ENCODE measurements at regions of chr5 and their contacts with region 1.

Region 1: DNA sequence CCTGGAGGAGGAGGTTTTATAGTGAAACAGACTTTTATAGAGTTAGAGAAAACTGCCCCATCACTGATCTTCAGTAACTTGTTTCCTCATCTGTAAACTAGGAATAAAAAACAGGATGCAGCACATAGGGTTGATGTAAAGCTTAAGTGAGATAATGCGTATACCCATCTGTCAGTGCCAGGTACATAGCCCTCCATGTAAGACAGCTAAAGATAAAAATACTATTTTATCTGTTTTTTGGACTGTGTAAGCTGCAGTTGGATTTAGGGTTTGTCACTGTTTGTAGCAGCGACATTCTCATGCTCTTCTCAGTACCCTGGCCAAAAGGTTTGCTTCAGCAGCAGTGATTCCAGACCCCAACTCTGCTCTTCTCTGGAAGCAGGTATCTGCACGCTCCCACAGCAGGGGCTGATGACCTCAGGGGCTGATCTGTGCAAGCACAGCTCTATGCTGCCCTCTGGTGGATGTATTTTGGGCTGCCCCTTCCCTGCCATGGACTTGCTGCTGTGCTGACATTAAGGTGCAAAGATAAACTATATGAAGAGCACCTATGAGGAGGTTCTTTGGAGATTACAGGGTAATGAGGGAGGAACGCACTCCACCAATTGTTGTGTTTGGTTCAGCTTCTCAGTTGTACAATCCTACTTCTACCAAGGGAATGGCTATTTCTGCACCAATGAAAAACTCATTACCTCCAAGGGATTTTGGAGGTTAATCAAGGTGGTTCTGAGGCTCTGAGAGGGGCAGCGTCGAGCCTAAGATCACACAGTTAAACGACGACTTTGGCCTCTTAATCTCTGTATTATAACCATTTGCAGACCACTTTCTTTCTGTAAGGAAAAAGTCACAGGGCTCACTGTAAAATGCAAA is 13.1 kb downstream of the HMHB1 start:
- DNase-seq: peak; percentile 72
- CTCF ChIP-seq: peak; percentile 96

Region 2: DNA sequence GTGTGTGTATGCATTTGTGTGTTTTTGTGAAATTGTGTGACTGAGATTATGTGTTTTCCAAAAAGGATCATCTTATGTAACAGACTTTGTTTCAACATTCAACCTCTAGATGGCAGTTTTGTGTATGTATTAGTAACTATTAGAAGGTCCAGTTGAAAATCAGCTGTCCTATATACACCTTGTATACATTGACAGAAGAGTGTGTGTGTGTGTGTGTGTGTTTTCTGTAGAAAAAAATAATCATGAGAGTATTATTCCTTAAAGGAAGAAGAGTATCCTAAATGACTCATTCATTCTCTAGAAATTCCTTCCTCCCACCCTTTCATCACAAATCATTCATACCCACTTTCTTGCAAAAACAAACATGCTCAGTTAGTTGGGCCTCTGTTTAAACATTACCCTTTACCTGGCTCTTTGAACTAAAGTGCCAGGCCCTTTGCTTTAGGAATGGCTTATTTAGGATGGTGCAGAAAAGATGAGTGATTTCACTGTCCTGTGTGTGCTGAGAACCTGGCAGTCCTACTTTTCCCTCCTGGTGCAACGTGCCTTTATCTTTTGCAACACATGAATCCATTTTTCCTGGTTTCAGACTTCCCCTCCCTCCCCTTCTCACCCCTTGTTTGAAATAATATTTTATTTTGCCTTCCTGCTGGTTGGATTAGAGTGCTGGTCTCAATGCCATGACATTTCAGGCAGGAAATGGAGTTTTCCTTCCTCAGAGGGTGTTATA is 902.7 kb before region 1 on chr5:
- CTCF ChIA-PET with region 1: interaction called, 22 read pairs
- POLR2A ChIA-PET with region 1: no interaction called
- DNase-seq: peak; percentile 49
- CTCF ChIP-seq: peak; percentile 44

Region 3: GRCh38 chr5:143403593-143404415 is 421.3 kb before region 1 on chr5 and contains the start of gene NR3C1:
- CTCF ChIA-PET with region 1: interaction called, 15 read pairs
- POLR2A ChIA-PET with region 1: interaction called, 4 read pairs
- DNase-seq: peak; percentile 82
- CTCF ChIP-seq: peak; percentile 63

Region 4: DNA sequence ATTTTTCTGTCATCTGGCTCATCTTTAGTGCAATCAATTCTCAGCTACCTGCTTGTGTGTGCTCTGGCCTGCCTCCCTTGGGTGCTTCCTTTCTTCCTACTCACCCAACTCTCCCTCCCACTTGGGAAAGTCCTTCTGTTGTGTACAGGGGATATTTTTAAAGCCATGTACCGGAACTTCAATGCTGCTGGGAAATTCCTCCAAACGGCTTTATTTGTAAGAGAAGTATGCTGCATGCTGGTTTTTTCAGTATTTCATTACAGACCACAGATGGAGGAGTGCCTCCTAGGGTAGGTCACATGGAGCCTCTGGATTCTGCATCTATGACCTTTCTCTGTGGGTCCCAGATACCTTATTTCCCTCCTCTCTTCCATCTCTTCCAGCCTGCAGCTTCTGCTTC is 18.5 kb before region 1 on chr5:
- CTCF ChIA-PET with region 1: interaction called, 18 read pairs
- POLR2A ChIA-PET with region 1: no interaction called
- DNase-seq: no peak
- CTCF ChIP-seq: no peak

Region 5: DNA sequence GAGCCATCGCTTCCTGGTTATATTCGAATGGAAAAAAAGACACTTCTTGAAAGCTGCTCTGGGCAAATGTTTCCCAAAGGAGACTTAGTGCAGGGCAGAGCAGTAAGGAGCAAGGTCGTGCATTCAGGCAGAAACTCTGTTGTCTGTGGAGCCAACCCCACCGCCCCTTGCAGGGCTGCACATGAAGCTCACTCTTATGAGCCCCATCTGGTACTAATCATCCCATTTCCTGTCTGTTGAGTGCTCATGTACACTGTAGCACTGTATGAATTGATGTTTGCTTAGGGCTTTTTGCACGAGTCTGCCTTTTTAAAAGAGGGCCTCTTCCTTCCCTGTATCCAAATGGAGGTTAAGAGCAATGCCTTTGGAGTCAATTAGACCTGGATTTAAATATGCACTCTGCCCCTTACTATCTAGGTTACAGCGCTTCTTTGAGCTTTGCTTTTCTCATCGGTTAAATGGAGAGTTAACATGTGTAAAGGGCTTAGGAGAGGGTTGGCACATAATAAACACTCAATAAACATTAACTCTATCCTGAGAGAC is 12.3 kb after region 1 on chr5:
- CTCF ChIA-PET with region 1: interaction called, 37 read pairs
- POLR2A ChIA-PET with region 1: no interaction called
- DNase-seq: no peak
- CTCF ChIP-seq: no peak